Stomach (tissue), 19 donors: ENCODE measurements at regions of chr5 and their contacts with region 1.

Region 1: DNA sequence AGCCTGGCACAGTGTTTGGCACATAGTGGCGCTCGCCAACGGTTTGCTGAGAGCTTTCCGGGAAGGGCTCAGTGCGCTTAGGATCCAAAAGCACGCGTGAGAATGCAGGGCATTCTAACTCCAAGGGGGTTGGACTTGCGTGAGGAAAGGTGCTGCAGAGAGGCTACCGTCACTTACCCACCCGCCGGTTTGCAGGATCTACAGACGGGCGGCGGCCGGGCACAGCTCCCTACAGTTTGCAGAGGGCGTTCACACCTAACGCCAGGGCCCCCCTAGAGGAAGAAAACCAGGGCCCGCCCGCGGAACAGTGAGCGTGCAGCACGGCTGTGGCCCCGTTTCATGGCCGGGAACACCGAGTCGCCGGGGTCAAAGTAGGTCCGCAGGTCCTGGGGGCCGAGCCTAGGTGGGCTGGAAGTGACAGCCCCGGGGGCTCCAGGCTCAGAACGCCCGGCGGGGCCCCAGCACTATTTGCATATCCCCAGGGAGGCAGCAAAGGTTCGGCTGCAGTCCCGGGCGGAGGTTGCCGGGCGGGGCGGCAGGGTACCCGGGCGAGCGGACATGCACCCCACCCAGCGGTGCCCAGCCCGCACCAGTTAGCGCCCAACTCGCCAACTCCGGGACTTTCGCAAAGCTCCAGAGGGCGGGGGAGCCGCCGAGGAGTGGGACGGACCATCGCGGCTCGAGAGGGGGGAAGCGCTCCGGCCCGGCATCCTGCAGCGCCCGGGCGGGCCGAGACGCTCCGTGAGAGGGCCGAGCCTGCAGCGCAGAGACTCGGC is 526 bp upstream of the GALNT10 start:
- DNase-seq: peak; percentile 89 to 93
- H3K4me3 ChIP-seq: peak overlapping the region; percentile 66 to 93 (median 78)
- H3K27ac ChIP-seq: peak overlapping the region; percentile 76 to 91 (median 88)
- H3K4me1 ChIP-seq: peaks cover 22 to 54% (median 43%) of the 10 kb centered on the region in 4 donors
- H3K27me3 ChIP-seq: no peaks in the 10 kb centered on the region
- CTCF ChIP-seq: peak in 5 of 7 experiments; percentile 7 to 29 (median 16)
- EP300 ChIP-seq: no peak
- POLR2A ChIP-seq: no peak

Region 2: DNA sequence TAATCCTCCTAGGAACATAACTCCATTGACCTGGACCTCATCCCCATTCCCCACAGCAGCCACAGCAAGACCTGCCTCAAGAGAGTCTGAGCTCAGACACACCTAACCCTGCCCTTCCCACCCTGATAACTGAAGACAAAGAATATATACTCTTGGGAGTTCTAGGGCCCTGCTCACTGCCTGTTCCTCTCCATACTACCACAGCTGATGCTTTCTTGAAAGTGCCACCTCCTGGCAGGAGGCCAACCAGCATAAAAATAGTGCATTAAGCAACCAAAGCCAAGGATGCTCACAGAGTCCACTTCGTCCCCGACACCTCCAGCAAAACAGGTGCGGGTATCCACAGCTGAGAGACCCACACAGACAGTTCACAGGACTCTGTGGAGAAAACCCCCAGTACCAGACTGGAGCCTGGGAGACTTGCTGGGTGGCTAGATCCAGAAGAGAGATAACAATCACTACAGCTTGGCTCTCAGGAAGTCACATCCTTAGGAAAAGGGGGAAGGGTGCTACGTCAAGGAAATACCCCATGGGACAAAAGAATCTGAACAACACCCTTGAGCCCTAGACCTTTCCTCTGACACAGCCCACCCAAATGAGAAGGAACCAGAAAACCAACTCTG is 174.8 kb before region 1 on chr5:
- intact Hi-C with region 1: no loop called
- DNase-seq: no peak
- H3K4me3 ChIP-seq: no peak overlapping the region
- H3K27ac ChIP-seq: no peak overlapping the region
- H3K4me1 ChIP-seq: no peaks in the 10 kb centered on the region
- H3K27me3 ChIP-seq: no peaks in the 10 kb centered on the region
- CTCF ChIP-seq: no peak
- EP300 ChIP-seq: no peak
- POLR2A ChIP-seq: no peak

Region 3: GRCh38 chr5:154118893-154119336 is 71.1 kb before region 1 on chr5:
- intact Hi-C with region 1: no loop called
- DNase-seq: no peak
- H3K4me3 ChIP-seq: no peak overlapping the region
- H3K27ac ChIP-seq: no peak overlapping the region
- H3K4me1 ChIP-seq: no peaks in the 10 kb centered on the region
- H3K27me3 ChIP-seq: no peaks in the 10 kb centered on the region
- CTCF ChIP-seq: no peak
- EP300 ChIP-seq: no peak
- POLR2A ChIP-seq: no peak

Region 4: DNA sequence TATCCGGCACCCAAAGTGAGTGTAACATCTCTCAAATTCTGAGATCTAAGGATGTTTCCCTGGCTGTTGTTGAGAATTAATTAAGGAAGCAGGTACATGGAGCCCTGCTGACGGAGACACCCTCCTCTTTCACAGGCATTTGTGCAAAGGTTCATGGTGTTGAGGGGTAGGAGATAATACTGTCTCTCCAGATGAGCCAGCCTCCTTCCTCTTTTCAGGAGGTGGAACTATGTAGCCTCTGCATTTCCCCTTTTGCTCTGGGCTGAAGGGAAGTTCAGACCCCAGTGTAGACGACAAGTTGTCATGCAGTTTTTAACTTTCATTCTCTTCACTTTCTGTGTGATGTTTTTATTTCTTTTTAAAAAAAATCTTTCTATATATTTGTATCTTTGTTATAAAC is 108.1 kb after region 1 on chr5:
- intact Hi-C with region 1: loop called (anchors 10 kb)
- DNase-seq: no peak
- H3K4me3 ChIP-seq: no peak overlapping the region
- H3K27ac ChIP-seq: peak overlapping the region in 2 of 5 donors; percentile 74 to 81
- H3K4me1 ChIP-seq: peaks cover 24 to 56% (median 37%) of the 10 kb centered on the region in 4 donors
- H3K27me3 ChIP-seq: no peaks in the 10 kb centered on the region
- CTCF ChIP-seq: no peak
- EP300 ChIP-seq: no peak
- POLR2A ChIP-seq: no peak

Region 5: DNA sequence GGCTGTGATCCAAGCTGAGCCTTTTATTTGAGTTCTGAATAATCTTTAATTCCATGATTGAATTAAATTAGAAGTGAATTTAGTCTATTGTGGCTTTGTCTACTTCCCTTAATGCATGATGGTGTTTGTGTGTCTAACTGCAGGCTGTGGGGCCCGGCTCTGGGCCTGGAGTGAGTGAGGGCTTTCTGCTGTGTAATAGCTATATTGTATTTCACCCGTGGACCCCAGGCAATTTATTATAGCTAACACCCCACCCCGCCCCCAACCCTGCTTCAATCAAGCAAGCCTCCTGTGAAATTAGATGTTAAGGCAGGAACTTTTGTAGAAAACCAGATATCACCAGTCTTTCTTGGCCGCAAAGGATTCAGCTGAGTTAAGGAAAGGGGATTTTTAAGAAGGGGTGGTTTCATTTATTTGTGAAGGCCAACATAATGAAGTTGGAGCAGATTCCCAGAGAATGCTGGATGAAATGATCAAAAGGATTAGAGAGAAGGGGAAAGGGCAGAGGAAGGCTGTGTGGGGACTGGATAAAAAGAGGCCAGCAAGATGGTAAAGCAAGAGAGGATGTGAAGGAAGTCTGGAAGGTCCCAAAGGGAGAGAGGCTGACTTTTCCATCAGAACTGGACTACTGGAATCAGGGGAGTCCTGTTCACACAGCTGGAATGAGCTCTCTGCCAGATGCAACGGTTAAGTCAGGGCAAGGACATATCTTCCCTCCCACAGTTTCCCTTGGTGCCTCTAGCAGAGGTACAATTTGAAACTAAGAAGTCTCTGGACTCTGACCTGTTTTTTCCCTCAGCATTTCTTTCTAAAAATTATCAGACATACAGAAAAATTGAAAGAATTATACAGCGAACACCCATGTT is 130.4 kb after region 1 on chr5:
- intact Hi-C with region 1: no loop called
- DNase-seq: peak in 1 of 2 donors; percentile 37
- H3K4me3 ChIP-seq: no peak overlapping the region
- H3K27ac ChIP-seq: no peak overlapping the region
- H3K4me1 ChIP-seq: peaks cover 0 to 13% (median 5%) of the 10 kb centered on the region in 4 donors
- H3K27me3 ChIP-seq: no peaks in the 10 kb centered on the region
- CTCF ChIP-seq: no peak
- EP300 ChIP-seq: no peak
- POLR2A ChIP-seq: no peak

Region 6: DNA sequence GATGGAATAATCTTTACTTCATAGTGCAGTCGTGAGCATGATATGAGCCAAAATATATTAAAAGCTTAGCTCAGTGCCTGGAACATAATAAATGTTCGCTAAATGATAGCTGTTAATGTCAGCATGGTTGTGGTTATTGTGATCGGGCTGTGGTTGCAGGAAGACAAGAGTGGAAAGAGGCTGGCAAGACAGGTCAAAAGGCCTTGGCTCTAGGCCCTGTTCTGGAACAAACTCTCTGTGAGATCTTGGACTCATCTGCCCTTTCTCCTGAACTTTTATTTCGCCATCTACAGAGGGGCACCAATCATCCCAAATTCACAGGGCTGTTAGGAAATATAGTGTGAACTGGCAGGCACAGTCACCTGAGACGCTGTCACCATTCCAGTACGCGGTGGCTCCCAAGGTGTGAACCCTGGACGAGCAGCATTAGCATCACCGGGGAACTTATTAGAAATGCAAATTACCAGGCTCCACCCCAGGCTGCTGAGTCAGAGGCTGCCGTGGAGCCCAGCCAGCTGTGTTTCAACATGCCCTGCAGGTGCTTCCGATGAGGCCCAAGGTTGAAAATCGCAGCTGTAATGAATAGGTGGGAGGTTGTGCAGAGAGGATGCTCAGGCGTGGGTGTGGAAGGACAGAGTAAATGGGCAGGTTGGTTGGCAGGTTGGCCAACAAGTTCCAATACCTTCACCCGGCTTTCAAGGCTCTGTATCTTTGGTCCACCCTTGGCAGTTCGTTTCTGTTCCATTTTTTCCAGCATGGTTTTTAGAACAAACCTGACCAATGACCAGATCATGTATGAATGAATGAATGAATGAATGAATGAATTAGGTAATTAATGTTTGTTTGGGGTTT is 205.6 kb after region 1 on chr5:
- intact Hi-C with region 1: no loop called
- DNase-seq: peak; percentile 38 to 65
- H3K4me3 ChIP-seq: no peak overlapping the region
- H3K27ac ChIP-seq: peak overlapping the region in 1 of 5 donors; percentile 22
- H3K4me1 ChIP-seq: peaks cover 0 to 17% (median 12%) of the 10 kb centered on the region in 4 donors
- H3K27me3 ChIP-seq: no peaks in the 10 kb centered on the region
- CTCF ChIP-seq: no peak
- EP300 ChIP-seq: no peak
- POLR2A ChIP-seq: no peak